Lower leg skin (tissue), 4 donors: ENCODE measurements at regions of chr11 and their contacts with region 1.

Region 1: GRCh38 chr11:83249972-83250593 is 36.1 kb downstream of the CCDC90B start:
- DNase-seq: no peak
- H3K4me3 ChIP-seq: no peak overlapping the region
- CTCF ChIP-seq: no peak
- POLR2A ChIP-seq: no peak

Region 2: GRCh38 chr11:82906244-82906654 is 343.8 kb before region 1 on chr11:
- intact Hi-C with region 1: loop called (anchors 5 kb)
- DNase-seq: no peak
- H3K4me3 ChIP-seq: no peak overlapping the region
- CTCF ChIP-seq: no peak
- POLR2A ChIP-seq: no peak